Head of caudate nucleus (tissue), 42 donors: ENCODE measurements at regions of chr1 and their contacts with region 1.

Region 1: DNA sequence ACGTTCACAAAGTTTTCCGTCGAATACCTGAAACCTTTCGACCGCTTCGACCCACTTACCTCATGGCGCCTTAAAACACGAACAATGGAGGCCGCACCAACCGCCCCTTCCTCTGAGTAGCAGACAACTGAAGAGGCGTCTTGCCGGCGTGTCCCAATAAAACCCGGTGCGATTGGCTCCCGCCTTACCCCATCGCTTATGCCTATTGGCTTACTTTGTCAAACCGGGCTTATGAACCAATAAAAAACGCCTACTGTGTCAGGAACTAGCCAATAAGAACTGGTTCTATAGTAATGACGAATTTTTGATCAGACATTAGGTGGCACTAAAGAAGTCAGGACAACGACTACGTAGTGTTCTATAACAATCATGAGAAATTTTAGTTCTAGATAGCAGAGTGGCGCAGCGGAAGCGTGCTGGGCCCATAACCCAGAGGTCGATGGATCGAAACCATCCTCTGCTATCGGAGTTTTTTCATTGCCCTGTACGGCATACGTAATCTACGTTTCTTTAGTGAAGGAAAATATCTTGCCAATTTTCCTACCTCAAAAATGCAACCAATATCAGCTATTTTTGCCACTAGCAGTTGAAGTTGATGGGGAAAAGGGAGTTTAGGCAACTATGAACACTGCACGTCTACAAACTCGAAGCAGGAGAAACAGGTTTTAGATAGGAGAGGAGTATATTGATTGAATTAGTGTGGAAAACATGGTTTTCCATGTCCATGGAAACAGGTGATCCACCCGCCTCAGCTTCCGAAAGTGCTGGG is at the start of gene ILF2:
- DNase-seq: peak; percentile 88 to 98 (median 95)

Region 2: GRCh38 chr1:153727463-153728304 is 56.6 kb after region 1 on chr1 and contains the start of gene INTS3:
- intact Hi-C with region 1: no loop called
- DNase-seq: peak; percentile 99 to 100 (median 100)

Region 3: GRCh38 chr1:153783233-153784190 is 112.5 kb after region 1 on chr1:
- intact Hi-C with region 1: loop called (anchors 2 kb)
- DNase-seq: peak; percentile 75 to 96 (median 92)